ENCODE measurements at regions of chr19 and their contacts with region 1.

Region 1: DNA sequence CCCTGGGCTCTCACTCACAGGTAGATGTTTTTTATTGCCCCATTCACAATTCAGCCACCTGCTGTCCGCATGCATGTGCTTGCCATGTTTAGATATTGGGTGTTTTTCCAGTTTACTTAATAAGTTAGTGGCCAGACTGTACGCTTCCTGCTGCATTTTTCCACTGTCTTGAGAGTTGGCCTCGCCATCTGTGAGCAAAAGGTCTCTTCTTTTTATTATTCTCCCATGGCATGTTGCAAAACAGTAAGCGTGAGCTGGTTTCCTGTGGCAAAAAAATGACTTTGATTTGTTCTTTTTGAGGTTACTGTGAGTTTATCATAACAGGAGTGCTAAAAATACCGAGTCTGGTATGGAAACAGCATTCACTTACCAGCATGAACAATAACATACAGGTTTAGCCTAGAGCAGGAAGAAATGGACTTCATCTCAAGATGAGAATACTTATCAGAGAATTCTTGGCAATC is 46.0 kb downstream of the SAE1 start:
- DNase-seq: peak in 23 of 35 experiments; percentile 5 to 73 (median 29)
- ATAC-seq: peak; percentile 87 to 96 (median 92)
- H3K4me3 ChIP-seq: peak overlapping the region in 1 of 2 donors; percentile 23
- H3K4me3 Mint-ChIP-seq: peak overlapping the region; percentile 65 to 73 (median 65)
- H3K27ac ChIP-seq: peak overlapping the region; percentile 66
- H3K27ac Mint-ChIP-seq: peak overlapping the region; percentile 98 to 99
- H3K4me1 ChIP-seq: peaks cover 48 to 53% of the 10 kb centered on the region in 2 experiments
- H3K4me1 Mint-ChIP-seq: peaks cover 64 to 70% (median 66%) of the 10 kb centered on the region in 3 donors
- H3K27me3 ChIP-seq: no peaks in the 10 kb centered on the region
- H3K27me3 Mint-ChIP-seq: no peaks in the 10 kb centered on the region

Region 2: GRCh38 chr19:46718157-46718933 is 458.3 kb before region 1 on chr19:
- CTCF ChIA-PET with region 1: no interaction called
- POLR2A ChIA-PET with region 1: no interaction called
- DNase-seq: peak; percentile 18 to 80 (median 48)
- ATAC-seq: peak; percentile 24 to 46 (median 42)
- H3K4me3 ChIP-seq: peak overlapping the region; percentile 79 to 93
- H3K4me3 Mint-ChIP-seq: peak overlapping the region; percentile 90 to 98 (median 94)
- H3K27ac ChIP-seq: peak overlapping the region; percentile 84
- H3K27ac Mint-ChIP-seq: peak overlapping the region; percentile 97 to 98
- H3K4me1 ChIP-seq: peaks cover 26 to 74% of the 10 kb centered on the region in 2 experiments
- H3K4me1 Mint-ChIP-seq: peaks cover 39 to 56% (median 46%) of the 10 kb centered on the region in 3 donors
- H3K27me3 ChIP-seq: no peaks in the 10 kb centered on the region
- H3K27me3 Mint-ChIP-seq: no peaks in the 10 kb centered on the region

Region 3: GRCh38 chr19:47157431-47158321 is 19.0 kb before region 1 on chr19:
- CTCF ChIA-PET with region 1: interaction called in 1 of 2 experiments, 12 read pairs
- POLR2A ChIA-PET with region 1: interaction called in 1 of 2 experiments, 3 read pairs
- DNase-seq: peak in 33 of 35 experiments; percentile 9 to 72 (median 39)
- ATAC-seq: peak; percentile 32 to 50 (median 38)
- H3K4me3 ChIP-seq: peak overlapping the region; percentile 6 to 29
- H3K4me3 Mint-ChIP-seq: peak overlapping the region; percentile 29 to 80 (median 61)
- H3K27ac ChIP-seq: peak overlapping the region; percentile 68
- H3K27ac Mint-ChIP-seq: peak overlapping the region; percentile 92 to 94
- H3K4me1 ChIP-seq: peaks cover 59 to 76% of the 10 kb centered on the region in 2 experiments
- H3K4me1 Mint-ChIP-seq: peaks cover 66 to 74% (median 68%) of the 10 kb centered on the region in 3 donors
- H3K27me3 ChIP-seq: no peaks in the 10 kb centered on the region
- H3K27me3 Mint-ChIP-seq: no peaks in the 10 kb centered on the region

Region 4: GRCh38 chr19:47195434-47195833 is 18.8 kb after region 1 on chr19:
- CTCF ChIA-PET with region 1: no interaction called
- POLR2A ChIA-PET with region 1: no interaction called
- DNase-seq: no peak
- ATAC-seq: no peak
- H3K4me3 ChIP-seq: no peak overlapping the region
- H3K4me3 Mint-ChIP-seq: no peak overlapping the region
- H3K27ac ChIP-seq: no peak overlapping the region
- H3K27ac Mint-ChIP-seq: no peak overlapping the region
- H3K4me1 ChIP-seq: peaks cover 12 to 22% of the 10 kb centered on the region in 2 experiments
- H3K4me1 Mint-ChIP-seq: peaks cover 30 to 37% (median 31%) of the 10 kb centered on the region in 3 donors
- H3K27me3 ChIP-seq: no peaks in the 10 kb centered on the region
- H3K27me3 Mint-ChIP-seq: no peaks in the 10 kb centered on the region